ENCODE measurements at regions of chr5 and their contacts with region 1.

Region 1: DNA sequence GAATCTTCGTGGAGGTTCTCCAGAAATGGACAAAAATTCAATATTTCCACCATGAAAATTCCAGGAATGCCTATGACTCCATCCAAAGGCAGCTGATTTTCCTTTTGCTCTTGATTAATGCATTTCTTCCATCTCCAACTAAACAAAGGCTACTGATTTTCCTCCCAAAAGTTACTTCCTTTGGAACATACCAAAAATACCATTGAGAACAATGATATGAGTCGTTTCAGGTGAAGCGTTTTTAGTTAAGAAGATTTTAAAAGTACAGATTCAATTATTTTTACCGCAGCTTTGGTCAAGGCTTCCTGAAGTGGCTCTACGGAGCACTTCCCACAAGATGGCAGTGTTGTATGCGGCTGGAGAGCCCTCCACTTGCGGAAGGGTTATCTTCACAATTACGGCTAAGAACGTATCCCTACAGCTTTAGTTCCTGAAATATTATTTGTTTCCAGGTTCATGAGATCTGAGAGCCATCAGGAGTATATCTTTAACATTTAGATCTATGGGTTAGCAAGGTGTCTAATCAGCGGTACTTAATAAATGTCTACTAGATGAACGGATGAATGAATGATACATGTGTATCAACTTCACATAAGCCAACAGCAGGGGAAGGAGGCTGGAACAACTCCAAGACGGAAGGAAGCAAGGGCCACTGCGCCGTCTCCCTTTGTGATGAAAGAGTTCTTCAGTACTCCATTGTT is 35.9 kb upstream of the ARSB start:
- DNase-seq: peak; percentile 57
- ATAC-seq: peak; percentile 87 to 88

Region 2: GRCh38 chr5:78424665-78425064 is 596.3 kb before region 1 on chr5:
- intact Hi-C with region 1: no loop called
- DNase-seq: no peak
- ATAC-seq: no peak

Region 3: GRCh38 chr5:79109527-79110492 is 88.8 kb after region 1 on chr5:
- intact Hi-C with region 1: loop called in 1 of 2 experiments (anchors 5 kb)
- DNase-seq: no peak
- ATAC-seq: no peak

Region 4: GRCh38 chr5:79133657-79134451 is 112.8 kb after region 1 on chr5:
- intact Hi-C with region 1: loop called (anchors 1 to 2 kb)
- DNase-seq: peak; percentile 67
- ATAC-seq: peak; percentile 77 to 93

Region 5: GRCh38 chr5:79464695-79465332 is 443.8 kb after region 1 on chr5:
- intact Hi-C with region 1: loop called in 1 of 2 experiments (anchors 5 kb)
- DNase-seq: no peak
- ATAC-seq: peak; percentile 12 to 47

Region 6: DNA sequence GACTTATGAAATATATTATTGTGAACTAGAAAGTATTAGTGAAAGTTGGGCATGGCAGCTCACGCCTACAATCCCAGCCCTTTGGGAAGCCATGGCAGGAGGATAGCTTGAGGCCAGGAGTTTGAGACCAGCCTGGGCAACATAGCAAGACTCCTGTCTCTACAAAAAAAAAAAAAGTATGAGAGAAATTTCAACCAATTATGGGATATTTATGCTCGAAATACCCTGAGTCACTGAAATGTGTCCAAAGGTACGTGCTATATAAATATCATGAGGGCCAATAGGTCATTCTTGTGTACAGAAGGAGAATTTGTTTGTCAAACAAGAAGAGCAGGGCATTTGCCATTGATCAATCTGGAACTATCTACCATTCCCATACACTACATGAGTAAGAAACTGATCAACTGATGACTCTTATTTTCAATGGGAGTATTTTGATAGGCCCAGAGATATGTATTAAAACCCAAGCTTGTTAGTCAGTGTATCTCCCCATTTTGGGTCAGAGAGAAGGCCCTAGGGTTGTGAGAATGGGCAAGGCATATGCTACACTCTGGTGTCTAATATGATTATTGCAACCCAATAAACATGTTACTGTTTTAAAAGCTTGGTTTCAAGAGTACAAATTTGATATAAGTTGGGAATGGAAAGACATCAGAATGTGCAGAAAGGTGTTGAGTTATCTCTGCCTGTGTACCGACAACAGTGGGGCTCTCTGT is 514.6 kb after region 1 on chr5:
- intact Hi-C with region 1: loop called in 1 of 2 experiments (anchors 5 kb)
- DNase-seq: no peak
- ATAC-seq: peak in 1 of 2 donors; percentile 49